Heart right ventricle (tissue), 16 donors: ENCODE measurements at regions of chr1 and their contacts with region 1.

Region 1: GRCh38 chr1:28860332-28861073 is 48.5 kb downstream of the OPRD1 start:
- DNase-seq: no peak
- ATAC-seq: no peak
- H3K4me3 ChIP-seq: no peak overlapping the region
- H3K27ac ChIP-seq: no peak overlapping the region
- H3K4me1 ChIP-seq: no peaks in the 10 kb centered on the region
- H3K27me3 ChIP-seq: peaks cover 0 to 30% (median 7%) of the 10 kb centered on the region in 7 donors
- CTCF ChIP-seq: no peak

Region 2: DNA sequence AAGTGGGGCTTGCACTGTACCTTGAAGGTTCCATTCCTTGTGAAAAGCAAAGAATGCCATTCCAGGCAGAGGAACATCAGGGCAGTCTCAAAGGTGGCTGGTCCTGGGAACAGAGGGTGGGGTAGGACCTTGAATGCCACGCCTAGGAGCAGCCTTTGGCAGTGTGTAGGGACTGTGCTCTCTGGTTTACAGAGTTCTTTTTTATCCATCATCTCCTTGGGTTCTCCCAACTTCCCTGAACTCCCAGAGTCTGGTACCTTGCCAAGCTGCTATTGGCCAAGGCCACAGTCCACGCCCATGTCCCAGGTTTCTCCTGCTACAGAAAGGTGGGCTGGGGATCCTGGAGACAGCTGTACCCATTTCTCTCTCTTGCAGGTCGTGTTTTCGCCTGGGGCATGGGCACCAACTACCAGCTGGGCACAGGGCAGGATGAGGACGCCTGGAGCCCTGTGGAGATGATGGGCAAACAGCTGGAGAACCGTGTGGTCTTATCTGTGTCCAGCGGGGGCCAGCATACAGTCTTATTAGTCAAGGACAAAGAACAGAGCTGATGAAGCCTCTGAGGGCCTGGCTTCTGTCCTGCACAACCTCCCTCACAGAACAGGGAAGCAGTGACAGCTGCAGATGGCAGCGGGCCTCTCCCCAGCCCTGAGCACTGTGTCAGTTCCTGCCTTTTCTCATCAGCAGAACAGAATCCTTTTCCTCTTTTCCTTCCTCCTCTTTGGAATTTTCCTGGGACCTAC is 322.9 kb before region 1 on chr1:
- intact Hi-C with region 1: loop called in 1 of 10 experiments (anchors 10 kb)
- DNase-seq: no peak
- ATAC-seq: peak in 6 of 8 donors; percentile 53 to 78 (median 65)
- H3K4me3 ChIP-seq: no peak overlapping the region
- H3K27ac ChIP-seq: no peak overlapping the region
- H3K4me1 ChIP-seq: no peaks in the 10 kb centered on the region
- H3K27me3 ChIP-seq: no peaks in the 10 kb centered on the region
- CTCF ChIP-seq: no peak

Region 3: GRCh38 chr1:28703629-28704028 is 156.9 kb before region 1 on chr1:
- intact Hi-C with region 1: no loop called
- DNase-seq: no peak
- ATAC-seq: no peak
- H3K4me3 ChIP-seq: no peak overlapping the region
- H3K27ac ChIP-seq: no peak overlapping the region
- H3K4me1 ChIP-seq: no peaks in the 10 kb centered on the region
- H3K27me3 ChIP-seq: no peaks in the 10 kb centered on the region
- CTCF ChIP-seq: no peak

Region 4: DNA sequence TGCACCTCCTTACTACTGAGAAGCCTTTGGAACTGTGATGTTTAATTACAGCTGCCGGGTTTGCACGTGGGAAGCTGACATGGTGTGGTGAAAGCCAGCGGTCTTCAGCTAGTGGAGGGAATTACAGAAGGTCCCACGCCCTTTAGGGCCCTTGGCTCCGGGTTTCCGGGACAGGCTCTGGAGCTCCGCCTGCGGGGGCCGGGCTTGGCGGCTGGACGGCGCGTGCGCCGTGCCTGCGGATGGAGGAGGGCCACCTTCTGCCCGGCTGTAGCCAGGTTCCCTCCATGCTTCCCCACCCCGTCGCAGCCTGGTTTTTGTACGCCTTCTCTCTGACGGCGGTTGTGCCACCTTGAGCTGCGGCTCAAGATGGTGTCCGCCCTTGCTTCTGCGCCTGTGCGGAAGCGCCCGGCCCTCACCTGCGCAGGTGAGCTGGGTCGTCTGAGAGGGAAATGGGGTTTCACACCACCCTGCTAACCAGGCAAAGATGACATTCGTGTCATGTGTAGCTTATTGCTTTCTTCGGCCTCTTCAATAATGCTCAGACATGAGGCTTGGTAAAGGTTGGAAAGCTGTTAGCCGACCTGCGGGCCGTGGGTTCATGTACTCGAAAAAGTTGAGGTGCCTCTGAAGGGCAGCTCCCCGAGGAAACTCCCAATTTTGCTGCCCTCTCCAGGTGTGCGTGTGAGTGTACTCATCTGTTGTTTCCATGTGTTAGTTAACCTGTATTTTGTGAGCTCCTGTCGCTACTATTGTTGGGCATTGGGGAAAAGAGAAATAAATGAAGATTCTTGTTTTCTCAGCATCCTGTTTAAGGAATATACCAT is 85.2 kb before region 1 on chr1:
- intact Hi-C with region 1: no loop called
- DNase-seq: peak; percentile 77 to 82
- ATAC-seq: peak; percentile 93 to 99 (median 96)
- H3K4me3 ChIP-seq: peak overlapping the region; percentile 9 to 58 (median 54)
- H3K27ac ChIP-seq: peak overlapping the region in 6 of 10 donors; percentile 21 to 60 (median 44)
- H3K4me1 ChIP-seq: peaks cover 0 to 18% (median 10%) of the 10 kb centered on the region in 9 donors
- H3K27me3 ChIP-seq: no peaks in the 10 kb centered on the region
- CTCF ChIP-seq: peak in 1 of 9 donors; percentile 12

Region 5: DNA sequence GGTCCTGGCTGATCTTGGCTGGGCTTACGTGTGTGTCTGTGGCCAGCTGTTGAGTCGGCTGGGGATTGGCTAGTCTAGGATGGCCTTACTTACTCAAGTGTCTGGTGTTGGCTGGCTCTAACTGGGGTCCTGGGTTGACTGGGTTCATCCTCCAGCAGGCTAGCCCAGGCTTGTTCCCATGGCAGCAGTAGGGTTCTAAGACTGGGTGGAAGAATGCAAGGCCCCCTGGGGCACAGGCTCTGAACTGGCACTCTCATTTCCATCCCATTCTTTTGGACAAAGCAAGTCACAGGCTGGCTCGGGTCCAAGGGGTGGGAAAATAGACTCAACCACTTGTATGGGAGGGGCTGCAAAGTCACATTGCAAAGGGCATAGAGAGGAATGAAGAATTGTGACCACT is 56.4 kb before region 1 on chr1:
- intact Hi-C with region 1: loop called in 1 of 10 experiments (anchors 5 kb)
- DNase-seq: no peak
- ATAC-seq: no peak
- H3K4me3 ChIP-seq: no peak overlapping the region
- H3K27ac ChIP-seq: no peak overlapping the region
- H3K4me1 ChIP-seq: no peaks in the 10 kb centered on the region
- H3K27me3 ChIP-seq: peaks cover 0 to 24% (median 0%) of the 10 kb centered on the region in 7 donors
- CTCF ChIP-seq: no peak

Region 6: DNA sequence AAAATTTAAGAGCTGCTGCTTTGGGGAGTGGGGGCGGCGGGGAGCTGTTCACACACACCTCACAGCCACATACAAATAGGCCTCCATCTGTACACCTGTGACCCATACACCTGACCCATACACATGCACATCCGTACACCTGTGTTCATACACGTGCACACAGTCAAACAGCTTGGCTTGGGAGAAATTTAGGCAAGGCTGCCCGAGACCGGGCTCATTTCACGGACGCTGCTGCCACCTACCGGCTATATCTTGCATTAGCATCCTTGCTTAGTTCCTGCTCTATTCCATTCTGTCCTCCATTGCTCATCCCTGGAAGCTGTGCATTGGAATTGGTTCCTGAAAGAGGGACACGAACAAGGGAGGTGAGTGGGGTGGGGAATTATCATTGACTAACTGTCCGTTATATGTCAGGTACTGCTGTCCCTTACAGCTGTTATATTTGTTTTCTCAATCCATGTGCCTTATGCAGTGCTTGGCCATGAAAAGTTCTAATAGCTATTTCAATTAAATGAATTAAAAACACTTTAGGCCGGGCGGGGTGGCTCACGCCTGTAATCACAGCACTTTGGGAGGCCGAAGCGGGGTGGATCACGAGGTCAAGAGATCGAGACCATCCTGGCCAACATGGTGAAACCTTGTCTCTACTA is 16.8 kb after region 1 on chr1:
- intact Hi-C with region 1: no loop called
- DNase-seq: peak; percentile 68 to 73
- ATAC-seq: peak; percentile 70 to 86 (median 84)
- H3K4me3 ChIP-seq: no peak overlapping the region
- H3K27ac ChIP-seq: no peak overlapping the region
- H3K4me1 ChIP-seq: peaks cover 0 to 5% (median 0%) of the 10 kb centered on the region in 9 donors
- H3K27me3 ChIP-seq: peaks cover 0 to 25% (median 7%) of the 10 kb centered on the region in 7 donors
- CTCF ChIP-seq: peak; percentile 87 to 95 (median 93)

Region 7: DNA sequence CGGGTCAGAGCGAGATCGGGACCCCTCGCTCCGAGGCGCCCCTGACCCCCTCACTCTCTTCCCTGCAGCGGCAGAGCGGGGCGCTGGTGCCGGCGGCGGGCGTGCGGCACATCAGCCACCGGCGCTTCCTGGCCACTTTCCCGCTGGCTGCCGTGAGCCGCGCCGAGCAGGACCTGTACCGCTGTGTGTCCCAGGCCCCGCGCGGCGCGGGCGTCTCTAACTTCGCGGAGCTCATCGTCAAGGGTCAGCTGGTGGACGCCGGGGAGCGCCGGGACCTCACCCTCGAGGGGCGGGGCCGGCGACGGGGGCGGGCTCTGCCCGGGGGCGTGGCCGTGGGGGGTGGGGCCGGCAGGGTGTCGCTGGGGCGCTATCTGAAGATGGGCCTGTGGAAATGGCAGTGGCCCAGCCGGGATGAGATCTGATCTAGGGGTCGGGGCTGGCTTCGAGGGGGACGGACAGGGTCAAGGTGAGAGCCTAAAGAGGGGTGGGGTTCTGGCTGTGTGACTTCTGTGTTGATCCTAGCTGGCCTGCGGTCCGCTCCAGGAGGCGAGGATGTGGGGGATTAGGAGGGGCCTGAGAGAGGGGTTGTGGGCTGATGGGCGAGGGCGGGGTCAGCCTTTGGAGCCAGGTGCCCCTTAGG is 399.4 kb after region 1 on chr1:
- intact Hi-C with region 1: no loop called
- DNase-seq: peak; percentile 30 to 71
- ATAC-seq: peak; percentile 72 to 91 (median 84)
- H3K4me3 ChIP-seq: peak overlapping the region in 9 of 10 donors; percentile 39 to 67 (median 59)
- H3K27ac ChIP-seq: peak overlapping the region in 2 of 10 donors; percentile 17 to 37
- H3K4me1 ChIP-seq: peaks cover 0 to 13% (median 10%) of the 10 kb centered on the region in 9 donors
- H3K27me3 ChIP-seq: peaks cover 0 to 48% (median 16%) of the 10 kb centered on the region in 7 donors
- CTCF ChIP-seq: no peak